ENCODE measurements at regions of chr21 and their contacts with region 1.

Region 1: DNA sequence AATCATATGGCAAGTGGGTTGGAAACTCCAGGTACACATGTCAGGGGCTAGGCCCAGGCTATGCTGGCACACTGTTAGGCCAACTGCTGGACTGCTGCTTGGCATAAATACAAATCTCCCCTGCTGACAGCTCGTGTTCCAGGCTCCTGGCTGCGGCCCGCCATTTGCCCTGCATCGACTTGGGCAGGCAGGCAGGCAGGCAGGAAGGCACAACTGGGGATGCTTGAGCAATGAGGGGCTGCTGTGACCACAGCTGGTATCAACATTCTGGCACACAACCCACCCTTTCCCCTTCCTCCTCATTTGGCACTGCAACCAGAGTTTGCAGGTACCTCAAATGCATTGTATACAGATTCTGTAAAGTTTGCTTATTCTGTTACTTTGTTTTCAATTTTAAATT is 53.2 kb downstream of the SAMSN1 start:
- DNase-seq: no peak
- H3K4me3 ChIP-seq: no peak overlapping the region
- CTCF ChIP-seq: no peak
- POLR2A ChIP-seq: no peak

Region 2: DNA sequence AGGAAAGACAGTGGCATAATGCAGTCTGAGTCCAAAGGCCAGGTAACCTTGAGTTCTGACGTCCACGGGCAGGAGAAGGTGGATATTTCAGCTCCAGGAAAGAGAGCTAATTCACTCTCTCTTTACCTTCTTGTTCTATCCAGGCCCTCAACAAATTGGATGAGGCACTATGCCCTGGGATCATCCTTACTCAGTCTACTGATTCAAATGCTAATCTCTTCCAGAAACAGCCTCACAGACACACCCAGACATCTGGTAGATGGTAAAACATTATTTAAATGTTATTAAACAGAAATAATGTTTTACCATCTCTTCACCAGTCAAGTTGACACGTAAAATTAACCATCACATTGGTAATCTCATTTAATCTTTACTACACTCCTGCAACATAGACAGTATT is 204.0 kb before region 1 on chr21:
- intact Hi-C with region 1: no loop called
- DNase-seq: no peak
- H3K4me3 ChIP-seq: no peak overlapping the region
- CTCF ChIP-seq: no peak
- POLR2A ChIP-seq: no peak

Region 3: GRCh38 chr21:14962217-14962616 is 469.3 kb after region 1 on chr21:
- intact Hi-C with region 1: loop called (anchors 5 kb)
- DNase-seq: no peak
- H3K4me3 ChIP-seq: no peak overlapping the region
- CTCF ChIP-seq: no peak
- POLR2A ChIP-seq: no peak

Measured in lower leg skin (tissue), 4 donors.